ENCODE measurements at regions of chr17 and their contacts with region 1.

Region 1: GRCh38 chr17:63834431-63835166 is 7.1 kb upstream of the FTSJ3 start:
- DNase-seq: peak; percentile 73
- H3K4me3 Mint-ChIP-seq: no peak overlapping the region
- H3K27ac Mint-ChIP-seq: peak overlapping the region; percentile 16
- H3K4me1 Mint-ChIP-seq: peaks cover 57% of the 10 kb centered on the region
- H3K27me3 Mint-ChIP-seq: no peaks in the 10 kb centered on the region

Region 2: GRCh38 chr17:63741221-63742049 is 93.2 kb before region 1 on chr17 and contains the start of gene STRADA:
- CTCF ChIA-PET with region 1: no interaction called
- POLR2A ChIA-PET with region 1: no interaction called
- DNase-seq: peak; percentile 99
- H3K4me3 Mint-ChIP-seq: peak within 1 kb of the TSS; percentile 93
- H3K27ac Mint-ChIP-seq: peak within 1 kb of the TSS; percentile 95
- H3K4me1 Mint-ChIP-seq: peaks cover 34% of the 10 kb centered on the region
- H3K27me3 Mint-ChIP-seq: no peaks in the 10 kb centered on the region
- total RNA-seq, gene STRADA: 46.8 to 49.0 TPM

Region 3: GRCh38 chr17:63804328-63804727 is 30.3 kb before region 1 on chr17:
- CTCF ChIA-PET with region 1: no interaction called
- POLR2A ChIA-PET with region 1: no interaction called
- DNase-seq: no peak
- H3K4me3 Mint-ChIP-seq: no peak overlapping the region
- H3K27ac Mint-ChIP-seq: no peak overlapping the region
- H3K4me1 Mint-ChIP-seq: no peaks in the 10 kb centered on the region
- H3K27me3 Mint-ChIP-seq: no peaks in the 10 kb centered on the region

Region 4: GRCh38 chr17:63823652-63824425 is 10.8 kb before region 1 on chr17:
- CTCF ChIA-PET with region 1: interaction called, 12 read pairs
- POLR2A ChIA-PET with region 1: interaction called, 4 read pairs
- DNase-seq: no peak
- H3K4me3 Mint-ChIP-seq: no peak overlapping the region
- H3K27ac Mint-ChIP-seq: no peak overlapping the region
- H3K4me1 Mint-ChIP-seq: peaks cover 51% of the 10 kb centered on the region
- H3K27me3 Mint-ChIP-seq: no peaks in the 10 kb centered on the region